CD4-positive, alpha-beta T cell (primary cell): ENCODE measurements at regions of chr2 and their contacts with region 1.

Region 1: GRCh38 chr2:171999604-172000469 is at the start of gene METAP1D:
- DNase-seq: peak; percentile 61 to 93 (median 82)
- ATAC-seq: peak; percentile 90
- H3K4me3 ChIP-seq: peak within 1 kb of the TSS; percentile 75
- H3K4me3 Mint-ChIP-seq: peak within 1 kb of the TSS; percentile 88
- H3K27ac ChIP-seq: peak within 1 kb of the TSS; percentile 23 to 38
- H3K27ac Mint-ChIP-seq: peak within 1 kb of the TSS; percentile 74
- H3K4me1 ChIP-seq: peaks cover 12% of the 10 kb centered on the region
- H3K4me1 Mint-ChIP-seq: peaks cover 23% of the 10 kb centered on the region
- H3K27me3 ChIP-seq: no peaks in the 10 kb centered on the region
- H3K27me3 Mint-ChIP-seq: peaks cover 8% of the 10 kb centered on the region
- CTCF ChIP-seq: no peak
- total RNA-seq, gene METAP1D: 7.2 to 7.9 TPM

Region 2: DNA sequence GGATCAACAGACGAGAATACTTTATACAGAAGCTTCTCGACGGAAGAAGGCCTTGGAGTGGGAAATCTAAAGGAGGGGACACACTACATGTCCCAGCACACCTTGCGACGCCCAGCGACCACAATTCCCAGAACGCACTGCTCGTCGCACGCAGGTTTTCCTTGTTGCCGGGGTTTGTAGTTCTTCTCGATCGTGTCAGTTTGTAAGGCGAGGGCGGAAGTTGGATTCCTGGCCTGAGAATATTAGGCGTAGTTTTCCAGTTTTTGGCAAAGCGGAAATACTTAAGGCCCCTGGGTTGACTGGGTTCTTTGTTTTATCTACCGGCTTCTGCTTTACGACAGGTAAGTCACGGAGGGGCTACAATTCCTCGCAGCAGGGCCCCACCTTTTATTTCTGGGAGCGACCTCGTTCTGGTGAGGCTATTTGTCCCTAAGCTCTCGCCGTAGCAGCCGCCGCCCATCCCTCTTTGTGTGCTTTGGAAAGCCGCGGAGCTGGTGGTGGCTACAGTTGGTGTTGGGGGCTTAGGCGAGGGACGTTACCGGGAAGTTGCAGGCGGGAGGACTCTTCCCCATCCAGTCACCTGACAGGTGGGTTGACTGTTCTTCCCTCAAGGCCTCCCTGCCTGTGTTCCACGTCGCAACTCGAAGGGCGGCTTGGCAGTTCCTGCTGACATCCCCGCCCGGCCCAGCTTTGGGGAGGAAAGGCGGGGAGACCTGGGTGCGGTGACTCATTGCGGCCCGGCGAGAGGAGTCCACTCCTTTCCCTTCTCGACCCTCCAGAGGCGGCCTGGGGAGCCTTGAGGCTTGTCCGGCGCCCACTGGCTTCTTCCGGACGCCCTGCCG is 312.3 kb before region 1 on chr2 and contains the start of gene DYNC1I2:
- CTCF ChIA-PET with region 1: no interaction called
- POLR2A ChIA-PET with region 1: no interaction called
- intact Hi-C with region 1: loop called in 1 of 2 experiments (anchors 5 kb)
- DNase-seq: peak; percentile 44 to 86 (median 60)
- ATAC-seq: peak; percentile 81
- H3K4me3 ChIP-seq: peak within 1 kb of the TSS; percentile 97
- H3K4me3 Mint-ChIP-seq: peak within 1 kb of the TSS; percentile 96
- H3K27ac ChIP-seq: peak within 1 kb of the TSS; percentile 49 to 52
- H3K27ac Mint-ChIP-seq: peak within 1 kb of the TSS; percentile 82
- H3K4me1 ChIP-seq: peaks cover 8% of the 10 kb centered on the region
- H3K4me1 Mint-ChIP-seq: peaks cover 36% of the 10 kb centered on the region
- H3K27me3 ChIP-seq: no peaks in the 10 kb centered on the region
- H3K27me3 Mint-ChIP-seq: no peaks in the 10 kb centered on the region
- CTCF ChIP-seq: no peak
- total RNA-seq, gene DYNC1I2: 10.5 to 11.6 TPM

Region 3: GRCh38 chr2:171893824-171894611 is 105.8 kb before region 1 on chr2 and contains the start of gene SLC25A12:
- CTCF ChIA-PET with region 1: no interaction called
- POLR2A ChIA-PET with region 1: interaction called, 4 read pairs
- intact Hi-C with region 1: loop called in 1 of 2 experiments (anchors 2 kb)
- DNase-seq: peak; percentile 43 to 87 (median 68)
- ATAC-seq: peak; percentile 92
- H3K4me3 ChIP-seq: peak within 1 kb of the TSS; percentile 93
- H3K4me3 Mint-ChIP-seq: peak within 1 kb of the TSS; percentile 94
- H3K27ac ChIP-seq: peak within 1 kb of the TSS; percentile 21 to 33
- H3K27ac Mint-ChIP-seq: peak within 1 kb of the TSS; percentile 80
- H3K4me1 ChIP-seq: peaks cover 6% of the 10 kb centered on the region
- H3K4me1 Mint-ChIP-seq: peaks cover 44% of the 10 kb centered on the region
- H3K27me3 ChIP-seq: peaks cover 0 to 3% of the 10 kb centered on the region in 2 experiments
- H3K27me3 Mint-ChIP-seq: no peaks in the 10 kb centered on the region
- CTCF ChIP-seq: no peak
- total RNA-seq, gene SLC25A12: 8.7 to 9.5 TPM

Region 4: GRCh38 chr2:172079838-172080640 is 80.2 kb after region 1 on chr2:
- CTCF ChIA-PET with region 1: no interaction called
- POLR2A ChIA-PET with region 1: no interaction called
- intact Hi-C with region 1: loop called in 1 of 2 experiments (anchors 10 kb)
- DNase-seq: peak in 2 of 14 experiments; percentile 21
- ATAC-seq: no peak
- H3K4me3 ChIP-seq: no peak overlapping the region
- H3K4me3 Mint-ChIP-seq: peak overlapping the region; percentile 42
- H3K27ac ChIP-seq: no peak overlapping the region
- H3K27ac Mint-ChIP-seq: peak overlapping the region; percentile 31
- H3K4me1 ChIP-seq: peaks cover 37% of the 10 kb centered on the region
- H3K4me1 Mint-ChIP-seq: peaks cover 41% of the 10 kb centered on the region
- H3K27me3 ChIP-seq: peaks cover 69 to 74% of the 10 kb centered on the region in 2 experiments
- H3K27me3 Mint-ChIP-seq: peaks cover 90% of the 10 kb centered on the region
- CTCF ChIP-seq: no peak